Transverse colon (tissue), 4 donors: ENCODE measurements at regions of chr10 and their contacts with region 1.

Region 1: GRCh38 chr10:27360581-27361172 is 120.1 kb upstream of the ACBD5 start:
- DNase-seq: peak; percentile 81
- H3K4me3 ChIP-seq: no peak overlapping the region
- H3K27ac ChIP-seq: no peak overlapping the region
- H3K4me1 ChIP-seq: no peaks in the 10 kb centered on the region
- H3K27me3 ChIP-seq: no peaks in the 10 kb centered on the region
- CTCF ChIP-seq: peak; percentile 65 to 74 (median 65)
- EP300 ChIP-seq: no peak
- POLR2A ChIP-seq: no peak

Region 2: DNA sequence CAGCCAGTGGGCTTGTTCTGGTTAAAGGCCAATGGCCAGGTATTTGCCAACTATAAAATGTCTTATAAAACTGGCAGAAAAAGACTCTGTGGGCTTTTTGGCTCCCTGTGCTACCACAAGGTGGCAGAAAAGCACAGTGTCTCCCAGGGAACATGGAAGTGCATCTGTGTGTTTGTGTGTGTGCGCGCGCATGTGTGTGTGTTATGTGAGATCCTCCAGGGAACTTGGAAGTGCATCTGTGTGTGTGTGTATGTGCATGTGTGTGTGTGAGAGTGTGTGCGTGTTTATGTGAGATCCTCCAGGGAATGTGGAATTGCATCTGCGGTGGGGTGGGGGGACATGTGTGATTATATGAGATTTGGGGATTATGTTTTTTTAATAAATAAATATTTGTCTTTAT is 469.7 kb before region 1 on chr10:
- in situ Hi-C with region 1: loop called (anchors 5 kb)
- intact Hi-C with region 1: no loop called
- DNase-seq: peak; percentile 73
- H3K4me3 ChIP-seq: no peak overlapping the region
- H3K27ac ChIP-seq: no peak overlapping the region
- H3K4me1 ChIP-seq: no peaks in the 10 kb centered on the region
- H3K27me3 ChIP-seq: no peaks in the 10 kb centered on the region
- CTCF ChIP-seq: peak; percentile 28 to 49 (median 37)
- EP300 ChIP-seq: no peak
- POLR2A ChIP-seq: no peak

Region 3: DNA sequence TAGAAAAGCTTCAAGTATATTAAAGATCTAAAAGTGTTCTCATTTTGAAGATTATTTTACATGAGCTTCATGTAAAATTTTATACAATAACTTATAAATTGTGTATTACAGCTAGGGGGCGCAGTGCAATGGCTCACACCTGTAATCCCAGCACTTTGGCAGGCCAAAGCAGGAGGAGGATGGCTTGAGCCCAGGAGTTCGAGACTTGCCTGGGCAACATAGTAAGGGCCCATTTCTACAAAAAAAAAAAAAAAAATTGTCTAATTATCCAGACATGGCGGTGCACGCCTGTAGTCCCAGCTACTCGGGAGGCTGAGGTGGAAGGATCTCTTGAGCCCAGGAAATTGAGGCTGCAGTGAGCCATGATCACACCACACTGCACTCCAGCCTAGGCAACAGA is 136.7 kb before region 1 on chr10:
- in situ Hi-C with region 1: loop called in 2 of 4 experiments (anchors 5 to 10 kb)
- intact Hi-C with region 1: no loop called
- DNase-seq: peak; percentile 36
- H3K4me3 ChIP-seq: no peak overlapping the region
- H3K27ac ChIP-seq: no peak overlapping the region
- H3K4me1 ChIP-seq: no peaks in the 10 kb centered on the region
- H3K27me3 ChIP-seq: no peaks in the 10 kb centered on the region
- CTCF ChIP-seq: peak; percentile 60 to 65 (median 62)
- EP300 ChIP-seq: no peak
- POLR2A ChIP-seq: no peak

Region 4: GRCh38 chr10:27794157-27794556 is 433.5 kb after region 1 on chr10:
- in situ Hi-C with region 1: no loop called
- intact Hi-C with region 1: no loop called
- DNase-seq: no peak
- H3K4me3 ChIP-seq: no peak overlapping the region
- H3K27ac ChIP-seq: no peak overlapping the region
- H3K4me1 ChIP-seq: no peaks in the 10 kb centered on the region
- H3K27me3 ChIP-seq: no peaks in the 10 kb centered on the region
- CTCF ChIP-seq: peak in 3 of 5 experiments; percentile 8 to 20 (median 9)
- EP300 ChIP-seq: no peak
- POLR2A ChIP-seq: no peak